Right ventricle myocardium superior (tissue), 1 donor: ENCODE measurements at regions of chr4 and their contacts with region 1.

Region 1: DNA sequence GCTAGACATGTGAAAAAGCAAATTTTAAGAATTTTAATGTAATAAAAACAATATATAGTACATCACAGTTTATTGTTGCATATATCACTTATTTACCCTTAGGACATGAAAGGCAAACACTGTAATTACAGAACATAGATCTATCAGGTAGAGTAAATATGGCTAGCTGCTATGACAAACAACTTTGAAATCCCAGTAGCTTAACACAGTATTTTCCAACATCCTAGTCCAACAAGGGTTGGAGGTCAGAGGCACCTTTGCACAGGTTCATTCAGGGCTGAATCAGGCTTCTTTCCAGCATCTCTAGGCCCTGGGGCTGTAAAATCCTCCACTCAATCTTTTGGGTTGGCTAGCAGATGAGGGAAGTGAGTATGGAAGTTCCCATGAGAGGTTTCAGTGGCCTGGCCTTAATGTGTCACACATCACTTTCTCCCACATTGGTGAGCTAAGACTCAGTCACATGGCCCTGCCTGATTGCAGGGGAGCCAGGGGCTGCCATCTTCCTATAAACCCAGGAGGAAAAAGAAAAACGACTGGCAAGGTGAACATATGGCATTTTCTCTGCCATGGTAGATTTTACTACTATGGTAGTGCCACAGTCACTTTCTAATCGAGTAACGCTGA is 32.9 kb downstream of the HERC6 start:
- DNase-seq: no peak
- ATAC-seq: no peak

Region 2: GRCh38 chr4:88442703-88443191 is 31.2 kb after region 1 on chr4:
- intact Hi-C with region 1: no loop called
- DNase-seq: no peak
- ATAC-seq: no peak

Region 3: GRCh38 chr4:88465653-88466192 is 54.1 kb after region 1 on chr4:
- intact Hi-C with region 1: loop called (anchors 2 kb)
- DNase-seq: no peak
- ATAC-seq: no peak